ENCODE measurements at regions of chr18 and their contacts with region 1.

Region 1: DNA sequence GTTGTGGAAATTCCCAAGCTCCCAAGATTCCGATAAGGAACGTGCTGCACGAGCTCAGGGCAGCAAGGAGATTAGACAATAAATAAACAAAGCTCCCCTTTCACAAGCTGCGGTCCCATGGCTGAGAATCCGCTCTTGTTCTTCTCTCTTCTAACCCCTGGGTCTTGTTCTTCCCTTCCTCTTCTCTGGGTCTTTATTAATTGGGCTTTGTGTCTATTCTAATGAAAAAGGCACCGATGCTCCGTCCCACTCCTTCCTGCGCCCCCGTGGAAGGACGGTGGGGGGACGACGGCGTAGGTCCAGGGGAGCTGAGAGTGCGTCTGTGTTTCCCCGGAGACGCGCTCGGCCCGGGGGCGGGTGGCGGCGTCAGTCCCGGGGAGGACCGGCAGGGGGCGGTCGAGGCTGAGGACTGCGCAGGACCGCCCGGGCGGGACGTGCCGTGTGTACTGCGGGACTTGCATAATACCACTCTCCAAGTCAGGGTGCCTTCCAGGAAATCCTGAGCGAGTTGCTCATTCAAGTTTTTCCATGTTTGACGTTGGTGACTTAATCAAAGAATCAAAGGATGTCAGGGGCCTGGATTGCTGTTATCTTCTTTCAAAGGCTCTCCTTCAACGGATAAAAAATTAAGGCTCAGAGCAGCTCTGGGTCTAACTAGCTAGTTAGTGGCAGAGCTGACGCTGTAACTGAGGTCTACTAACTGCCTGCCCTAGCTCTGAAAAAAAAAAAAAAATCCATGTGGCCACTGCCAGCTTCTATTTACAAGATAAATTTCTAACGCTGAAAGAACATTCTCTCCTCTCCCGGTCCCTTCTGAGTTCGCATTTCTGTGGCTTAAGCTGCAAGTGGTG is 321.4 kb downstream of the TGIF1 start:
- DNase-seq: peak; percentile 87
- CTCF ChIP-seq: peak; percentile 89

Region 2: GRCh38 chr18:3758531-3758930 is 12.8 kb before region 1 on chr18:
- CTCF ChIA-PET with region 1: interaction called, 21 read pairs
- POLR2A ChIA-PET with region 1: no interaction called
- DNase-seq: no peak
- CTCF ChIP-seq: no peak

Region 3: GRCh38 chr18:3789525-3789924 is 18.2 kb after region 1 on chr18:
- CTCF ChIA-PET with region 1: interaction called, 16 read pairs
- POLR2A ChIA-PET with region 1: no interaction called
- DNase-seq: no peak
- CTCF ChIP-seq: no peak

Region 4: DNA sequence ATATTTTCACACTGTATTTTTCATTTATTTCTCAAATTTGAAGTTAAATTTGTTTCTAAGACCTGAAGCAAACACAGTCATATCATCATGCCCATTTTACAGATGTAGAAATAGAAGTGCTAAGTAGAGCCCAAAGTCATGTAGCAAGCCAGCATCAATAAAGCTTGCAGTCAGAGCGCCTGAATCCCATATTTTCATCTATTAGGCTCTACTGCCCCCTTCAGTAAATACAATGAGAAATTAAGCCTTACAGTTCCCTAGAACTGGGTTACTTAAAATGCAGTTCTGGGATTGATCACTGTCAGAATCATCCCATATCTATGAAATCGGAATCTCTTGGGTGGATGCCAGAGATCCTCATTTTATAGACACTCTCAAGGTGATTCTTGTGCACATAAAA is 98.5 kb after region 1 on chr18:
- CTCF ChIA-PET with region 1: interaction called, 11 read pairs
- POLR2A ChIA-PET with region 1: no interaction called
- DNase-seq: no peak
- CTCF ChIP-seq: no peak

Region 5: DNA sequence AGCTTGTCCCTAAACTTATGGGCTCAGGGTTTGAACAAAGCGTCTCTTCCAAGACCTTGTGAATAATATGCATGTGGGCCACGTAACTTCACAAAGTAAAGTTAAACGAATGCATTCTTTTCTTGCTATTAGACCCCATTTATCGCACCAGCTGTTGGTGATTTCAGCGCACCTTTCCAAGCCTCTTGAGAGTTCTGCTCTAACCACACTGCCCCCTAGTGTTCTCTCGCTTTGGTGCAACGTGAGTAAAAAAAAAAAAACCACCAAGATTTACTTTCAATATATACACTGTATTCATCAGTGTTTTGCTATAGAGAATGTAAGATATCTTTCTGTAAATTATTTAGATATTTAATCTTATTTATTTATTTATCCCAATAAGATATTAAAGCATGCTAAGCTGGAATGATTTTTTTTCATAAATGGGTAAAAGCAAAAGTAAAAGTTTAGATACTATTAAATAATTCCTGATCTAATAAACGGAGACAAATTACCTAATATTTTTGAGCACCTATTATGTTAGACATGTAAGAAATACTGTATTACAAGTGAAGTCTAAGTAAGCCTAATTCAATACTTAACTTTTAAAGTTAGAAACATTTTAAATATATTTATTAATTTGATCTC is 224.2 kb after region 1 on chr18:
- CTCF ChIA-PET with region 1: interaction called, 53 read pairs
- POLR2A ChIA-PET with region 1: no interaction called
- DNase-seq: peak; percentile 31
- CTCF ChIP-seq: peak; percentile 68

Region 6: DNA sequence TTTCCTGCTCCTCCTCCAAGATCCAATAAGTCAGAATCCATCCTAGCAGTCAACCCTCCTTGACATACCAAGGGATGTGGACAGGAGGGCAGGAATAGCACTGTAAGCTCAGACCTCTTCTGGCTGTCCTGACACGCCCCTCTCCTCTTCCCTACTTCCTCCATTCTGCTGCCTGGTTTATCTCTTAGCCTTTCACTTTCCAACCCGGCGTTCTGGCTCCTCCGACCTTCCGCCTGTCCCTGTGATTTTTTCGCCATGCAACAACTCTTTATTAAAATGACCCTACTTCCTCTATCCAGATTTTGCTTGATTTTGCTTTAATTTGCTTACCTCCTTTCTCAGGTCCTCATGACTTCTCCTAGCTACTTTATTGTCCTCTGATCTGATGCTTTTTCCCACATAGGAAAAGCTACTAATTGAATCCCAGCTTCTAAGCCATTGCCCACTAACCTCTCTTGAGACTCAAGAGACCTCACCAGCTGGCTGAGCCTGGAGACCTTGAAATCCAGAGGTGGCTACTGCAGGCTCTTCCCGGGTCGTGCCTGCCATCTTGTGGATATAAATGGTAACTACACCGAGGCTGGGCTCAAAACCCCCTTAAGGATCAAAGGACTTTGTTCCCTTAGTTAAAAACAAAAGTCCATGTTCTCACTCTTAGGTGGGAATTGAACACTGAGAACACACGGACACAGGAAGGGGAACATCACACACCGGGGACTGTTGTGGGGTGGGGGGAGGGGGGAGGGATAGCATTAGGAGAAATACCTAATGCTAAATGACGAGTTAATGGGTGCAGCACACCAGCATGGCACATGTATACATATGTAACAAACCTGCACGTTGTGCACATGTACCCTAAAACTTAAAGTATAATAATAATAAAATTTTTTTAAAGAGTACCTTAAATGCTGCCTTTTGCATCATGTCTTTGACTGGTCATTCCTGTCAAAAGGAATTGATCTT is 1286.3 kb after region 1 on chr18:
- CTCF ChIA-PET with region 1: interaction called, 17 read pairs
- POLR2A ChIA-PET with region 1: no interaction called
- DNase-seq: peak; percentile 53
- CTCF ChIP-seq: peak; percentile 81

Measured in GM10248 (cell line).